ENCODE measurements at regions of chr7 and their contacts with region 1.

Region 1: GRCh38 chr7:133434055-133434865 is 181.4 kb downstream of the EXOC4 start:
- DNase-seq: peak; percentile 65
- H3K4me3 ChIP-seq: no peak overlapping the region
- H3K27ac ChIP-seq: no peak overlapping the region
- H3K4me1 ChIP-seq: peaks cover 11% of the 10 kb centered on the region
- H3K27me3 ChIP-seq: no peaks in the 10 kb centered on the region
- CTCF ChIP-seq: peak; percentile 33 to 34
- POLR2A ChIP-seq: no peak

Region 2: GRCh38 chr7:132580717-132581285 is 853.5 kb before region 1 on chr7:
- CTCF ChIA-PET with region 1: interaction called, 25 read pairs
- POLR2A ChIA-PET with region 1: no interaction called
- dilution Hi-C with region 1: no loop called
- intact Hi-C with region 1: loop called (anchors 10 kb)
- DNase-seq: peak; percentile 78
- H3K4me3 ChIP-seq: no peak overlapping the region
- H3K27ac ChIP-seq: no peak overlapping the region
- H3K4me1 ChIP-seq: peaks cover 7% of the 10 kb centered on the region
- H3K27me3 ChIP-seq: no peaks in the 10 kb centered on the region
- CTCF ChIP-seq: peak; percentile 59 to 76
- POLR2A ChIP-seq: no peak

Region 3: GRCh38 chr7:133081599-133082389 is 352.5 kb before region 1 on chr7 and contains the start of gene CHCHD3:
- CTCF ChIA-PET with region 1: interaction called, 10 read pairs
- POLR2A ChIA-PET with region 1: no interaction called
- dilution Hi-C with region 1: no loop called
- intact Hi-C with region 1: loop called (anchors 2 kb)
- DNase-seq: peak; percentile 99
- H3K4me3 ChIP-seq: peak within 1 kb of the TSS; percentile 88
- H3K27ac ChIP-seq: peak within 1 kb of the TSS; percentile 80
- H3K4me1 ChIP-seq: peaks cover 14% of the 10 kb centered on the region
- H3K27me3 ChIP-seq: no peaks in the 10 kb centered on the region
- CTCF ChIP-seq: no peak
- POLR2A ChIP-seq: peak; percentile 68
- total RNA-seq, gene CHCHD3: 63.7 and 65.3 TPM in 2 replicates

Region 4: DNA sequence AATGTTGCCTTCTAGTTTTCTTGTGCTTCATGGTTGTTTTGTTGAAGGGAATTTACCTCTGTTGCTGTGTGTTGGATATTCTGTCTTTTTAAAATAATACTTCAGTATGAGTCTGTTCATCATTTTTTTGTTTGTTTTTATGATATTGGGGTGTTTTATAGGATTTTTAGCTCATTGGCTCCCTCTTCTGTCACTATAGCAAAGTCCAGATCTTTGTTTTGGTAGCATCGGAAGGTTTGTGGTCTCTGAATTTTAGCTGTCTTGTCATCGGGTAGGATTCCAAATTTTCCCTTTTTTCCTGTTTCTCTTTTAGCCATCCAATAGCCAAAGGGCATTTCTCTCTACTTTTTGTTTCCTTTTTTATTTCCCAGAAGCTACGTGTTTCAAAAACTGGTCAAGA is 90.0 kb before region 1 on chr7:
- CTCF ChIA-PET with region 1: interaction called, 36 read pairs
- POLR2A ChIA-PET with region 1: no interaction called
- dilution Hi-C with region 1: no loop called
- intact Hi-C with region 1: no loop called
- DNase-seq: peak; percentile 42
- H3K4me3 ChIP-seq: no peak overlapping the region
- H3K27ac ChIP-seq: no peak overlapping the region
- H3K4me1 ChIP-seq: no peaks in the 10 kb centered on the region
- H3K27me3 ChIP-seq: no peaks in the 10 kb centered on the region
- CTCF ChIP-seq: peak; percentile 28 to 34
- POLR2A ChIP-seq: no peak

Region 5: GRCh38 chr7:133419041-133419440 is 15.2 kb before region 1 on chr7:
- CTCF ChIA-PET with region 1: interaction called, 13 read pairs
- POLR2A ChIA-PET with region 1: no interaction called
- dilution Hi-C with region 1: no loop called
- intact Hi-C with region 1: no loop called
- DNase-seq: no peak
- H3K4me3 ChIP-seq: no peak overlapping the region
- H3K27ac ChIP-seq: no peak overlapping the region
- H3K4me1 ChIP-seq: no peaks in the 10 kb centered on the region
- H3K27me3 ChIP-seq: no peaks in the 10 kb centered on the region
- CTCF ChIP-seq: no peak
- POLR2A ChIP-seq: no peak

Region 6: DNA sequence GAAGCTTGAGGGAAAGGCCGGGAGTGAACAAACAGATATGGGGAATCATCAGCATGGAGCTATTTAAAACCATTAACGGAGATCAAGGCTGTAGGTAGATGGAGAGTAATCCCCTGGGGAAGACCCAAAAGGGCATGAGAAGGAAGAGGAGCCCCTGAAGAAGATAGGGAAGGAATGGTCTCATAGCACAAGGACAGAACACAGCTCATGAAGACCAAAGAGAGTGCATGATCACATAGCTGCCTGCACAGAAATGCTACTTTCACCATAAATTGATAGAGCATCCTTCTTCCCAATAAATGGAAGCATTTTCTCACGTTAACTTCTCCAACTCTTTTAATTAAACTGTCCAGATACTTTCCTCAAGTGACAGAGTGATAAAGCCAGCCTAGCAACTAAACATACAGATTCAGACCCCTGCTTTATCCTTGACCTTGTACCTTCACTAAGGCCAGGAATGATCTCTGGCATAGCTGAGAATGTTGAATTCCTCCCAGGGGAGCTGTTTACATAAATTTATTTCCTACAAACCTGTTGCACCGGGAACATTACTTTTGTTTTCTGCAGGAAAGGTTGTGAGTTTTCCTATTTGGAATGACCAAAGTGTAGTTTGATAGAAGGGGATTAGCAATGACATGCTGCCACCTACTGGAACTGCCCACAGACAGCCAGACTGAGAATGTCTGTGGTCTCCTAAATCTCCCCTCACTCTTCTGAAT is 582.1 kb after region 1 on chr7:
- CTCF ChIA-PET with region 1: interaction called, 3 read pairs
- POLR2A ChIA-PET with region 1: no interaction called
- dilution Hi-C with region 1: no loop called
- intact Hi-C with region 1: loop called (anchors 1 kb)
- DNase-seq: peak; percentile 57
- H3K4me3 ChIP-seq: no peak overlapping the region
- H3K27ac ChIP-seq: no peak overlapping the region
- H3K4me1 ChIP-seq: no peaks in the 10 kb centered on the region
- H3K27me3 ChIP-seq: no peaks in the 10 kb centered on the region
- CTCF ChIP-seq: peak; percentile 59 to 76
- POLR2A ChIP-seq: no peak

Measured in endothelial cell of umbilical vein (primary cell).